Transverse colon (tissue), 4 donors: ENCODE measurements at regions of chr2 and their contacts with region 1.

Region 1: GRCh38 chr2:3728104-3729054 is 25.0 kb downstream of the DCDC2C start:
- DNase-seq: no peak
- H3K4me3 ChIP-seq: no peak overlapping the region
- H3K27ac ChIP-seq: no peak overlapping the region
- H3K4me1 ChIP-seq: peaks cover 0 to 4% (median 2%) of the 10 kb centered on the region in 4 donors
- H3K27me3 ChIP-seq: no peaks in the 10 kb centered on the region
- CTCF ChIP-seq: peak in 4 of 5 experiments; percentile 40 to 51 (median 48)
- EP300 ChIP-seq: no peak
- POLR2A ChIP-seq: no peak

Region 2: DNA sequence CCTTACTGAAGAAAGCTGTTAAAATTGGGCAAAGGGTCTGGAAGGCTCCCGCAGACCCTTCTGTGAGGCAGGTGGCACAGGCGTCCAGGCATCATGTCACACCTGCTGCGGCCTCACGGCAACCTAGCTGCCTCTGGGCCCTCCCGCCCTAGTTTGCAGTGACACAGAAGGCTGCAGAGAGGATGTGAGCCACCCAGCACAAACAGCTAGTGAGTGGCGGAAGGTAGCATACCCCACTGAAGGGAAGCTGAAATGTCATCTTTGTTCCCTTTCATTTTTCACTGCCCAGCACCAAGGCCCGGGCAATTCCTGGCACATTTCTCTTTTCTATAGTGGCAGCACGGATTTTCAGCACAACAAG is 295.1 kb before region 1 on chr2:
- in situ Hi-C with region 1: no loop called
- intact Hi-C with region 1: no loop called
- DNase-seq: no peak
- H3K4me3 ChIP-seq: no peak overlapping the region
- H3K27ac ChIP-seq: no peak overlapping the region
- H3K4me1 ChIP-seq: no peaks in the 10 kb centered on the region
- H3K27me3 ChIP-seq: no peaks in the 10 kb centered on the region
- CTCF ChIP-seq: no peak
- EP300 ChIP-seq: no peak
- POLR2A ChIP-seq: no peak

Region 3: DNA sequence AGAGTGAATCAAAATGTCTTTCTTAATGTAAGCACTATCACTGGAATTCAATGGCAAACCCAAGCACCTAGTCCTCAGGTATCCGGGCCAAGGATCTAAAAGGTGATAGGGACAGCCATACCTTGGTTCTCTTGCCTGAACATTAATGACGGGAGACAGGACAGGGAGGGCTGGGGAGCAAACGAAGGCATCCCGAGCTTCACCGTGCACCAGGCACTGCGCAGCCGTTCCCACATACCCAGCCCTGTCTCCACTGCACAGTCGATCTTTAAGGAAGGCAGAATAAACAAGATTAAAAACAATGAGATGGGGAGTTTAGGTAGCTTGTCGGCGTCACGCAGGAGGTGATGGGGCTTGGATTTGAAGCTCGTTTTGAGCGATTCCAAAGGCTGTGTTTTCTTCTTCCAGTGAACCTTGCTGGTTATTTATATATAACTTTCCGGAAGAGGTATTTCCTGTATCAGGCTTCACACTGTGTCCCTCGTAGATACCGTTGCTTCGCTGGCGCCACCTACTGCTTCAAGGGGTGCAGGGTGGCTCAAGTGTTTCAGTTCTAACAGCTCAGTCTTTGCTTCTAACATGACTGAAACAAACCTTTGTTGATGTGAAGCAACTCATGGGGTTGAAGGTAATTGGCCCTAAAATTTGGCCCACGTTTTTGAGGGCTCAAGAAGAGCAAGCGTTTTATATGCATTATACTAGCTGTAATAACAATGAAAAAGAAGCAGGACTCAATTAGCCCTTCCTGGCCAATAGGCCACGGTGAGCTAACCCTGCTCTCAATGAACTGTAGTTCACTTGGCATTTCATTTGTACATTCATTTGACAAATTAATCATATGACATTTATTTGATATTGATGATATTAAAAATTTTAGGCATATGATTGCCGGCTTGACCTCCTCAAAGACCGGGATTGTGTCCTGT is 52.4 kb after region 1 on chr2:
- in situ Hi-C with region 1: no loop called
- intact Hi-C with region 1: loop called (anchors 10 kb)
- DNase-seq: peak; percentile 36
- H3K4me3 ChIP-seq: no peak overlapping the region
- H3K27ac ChIP-seq: no peak overlapping the region
- H3K4me1 ChIP-seq: no peaks in the 10 kb centered on the region
- H3K27me3 ChIP-seq: peaks cover 5% of the 10 kb centered on the region
- CTCF ChIP-seq: peak in 3 of 5 experiments; percentile 28 to 42 (median 28)
- EP300 ChIP-seq: no peak
- POLR2A ChIP-seq: no peak